ENCODE measurements at regions of chr16 and their contacts with region 1.

Region 1: GRCh38 chr16:4425378-4426020 is at the start of gene DNAJA3:
- DNase-seq: peak; percentile 91 to 97 (median 95)
- ATAC-seq: peak; percentile 93
- H3K4me3 ChIP-seq: peak within 1 kb of the TSS; percentile 97
- H3K4me3 Mint-ChIP-seq: peak within 1 kb of the TSS; percentile 92 to 99 (median 98)
- H3K27ac ChIP-seq: peak within 1 kb of the TSS; percentile 95
- H3K27ac Mint-ChIP-seq: peak within 1 kb of the TSS; percentile 99 to 100 (median 100)
- H3K4me1 ChIP-seq: peaks cover 18% of the 10 kb centered on the region in 2 donors
- H3K4me1 Mint-ChIP-seq: peaks cover 26 to 37% (median 31%) of the 10 kb centered on the region in 7 donors
- H3K27me3 ChIP-seq: no peaks in the 10 kb centered on the region
- H3K27me3 Mint-ChIP-seq: peaks cover 0 to 4% (median 0%) of the 10 kb centered on the region in 5 donors
- total RNA-seq, gene DNAJA3: 33.6 to 79.8 (median 70.5) TPM

Region 2: GRCh38 chr16:4232541-4233386 is 192.7 kb before region 1 on chr16:
- CTCF ChIA-PET with region 1: no interaction called
- POLR2A ChIA-PET with region 1: no interaction called
- intact Hi-C with region 1: no loop called
- DNase-seq: no peak
- ATAC-seq: no peak
- H3K4me3 ChIP-seq: no peak overlapping the region
- H3K4me3 Mint-ChIP-seq: no peak overlapping the region
- H3K27ac ChIP-seq: no peak overlapping the region
- H3K27ac Mint-ChIP-seq: no peak overlapping the region
- H3K4me1 ChIP-seq: no peaks in the 10 kb centered on the region
- H3K4me1 Mint-ChIP-seq: no peaks in the 10 kb centered on the region
- H3K27me3 ChIP-seq: no peaks in the 10 kb centered on the region
- H3K27me3 Mint-ChIP-seq: peaks cover 7 to 14% (median 10%) of the 10 kb centered on the region in 5 donors

Region 3: DNA sequence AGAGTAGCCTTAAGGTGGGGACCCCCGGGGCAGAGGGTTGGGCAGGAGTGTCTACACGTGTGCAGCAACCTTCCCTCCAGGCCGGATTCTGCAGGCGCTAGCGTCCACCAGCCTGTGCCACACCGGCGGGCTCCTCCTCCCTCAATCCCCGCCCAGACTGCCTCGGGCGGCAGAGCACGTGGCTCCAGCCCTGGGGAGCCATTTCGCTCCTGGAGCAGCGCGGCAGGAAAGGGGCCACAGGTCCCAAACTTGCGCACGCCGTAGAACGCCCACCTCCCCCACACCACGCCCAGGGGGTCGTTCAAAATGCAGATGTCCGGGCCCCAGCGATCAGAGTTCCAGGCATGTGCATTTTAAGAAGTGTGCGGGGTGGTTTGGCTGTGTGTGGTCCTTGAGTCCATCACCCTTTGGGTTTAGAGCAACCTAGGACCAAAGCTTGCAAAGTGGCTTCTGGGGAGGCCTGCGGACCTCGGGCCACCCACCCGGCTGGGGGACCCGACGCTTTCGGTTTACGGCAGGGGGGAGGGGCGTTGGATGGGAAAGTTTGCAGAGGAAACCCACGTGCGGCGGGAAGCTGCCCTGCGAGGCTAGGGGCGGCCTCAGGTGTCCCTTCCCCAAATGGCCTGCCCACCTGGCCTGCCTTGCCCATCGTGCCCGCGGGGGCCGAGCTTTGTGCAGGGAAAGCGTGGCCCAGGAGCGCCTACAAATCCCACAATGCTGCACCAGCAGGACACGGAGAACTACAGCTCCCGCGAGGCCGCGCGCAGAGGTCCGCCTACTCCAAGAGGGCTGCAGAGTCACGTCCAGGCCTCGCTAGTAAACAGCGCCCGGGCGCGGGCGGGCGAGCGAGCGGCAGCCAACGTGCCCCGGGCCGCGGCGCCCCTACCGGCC is 154.1 kb before region 1 on chr16:
- CTCF ChIA-PET with region 1: no interaction called
- POLR2A ChIA-PET with region 1: no interaction called
- intact Hi-C with region 1: loop called in 1 of 2 experiments (anchors 1 kb)
- DNase-seq: peak; percentile 68 to 90 (median 84)
- ATAC-seq: peak; percentile 89
- H3K4me3 ChIP-seq: peak overlapping the region; percentile 99
- H3K4me3 Mint-ChIP-seq: peak overlapping the region; percentile 85 to 97 (median 92)
- H3K27ac ChIP-seq: peak overlapping the region; percentile 58
- H3K27ac Mint-ChIP-seq: peak overlapping the region; percentile 67 to 98 (median 83)
- H3K4me1 ChIP-seq: peaks cover 5 to 13% of the 10 kb centered on the region in 2 donors
- H3K4me1 Mint-ChIP-seq: peaks cover 8 to 23% (median 15%) of the 10 kb centered on the region in 7 donors
- H3K27me3 ChIP-seq: no peaks in the 10 kb centered on the region
- H3K27me3 Mint-ChIP-seq: no peaks in the 10 kb centered on the region

Region 4: GRCh38 chr16:4283939-4284338 is 141.6 kb before region 1 on chr16:
- CTCF ChIA-PET with region 1: no interaction called
- POLR2A ChIA-PET with region 1: no interaction called
- intact Hi-C with region 1: no loop called
- DNase-seq: no peak
- ATAC-seq: no peak
- H3K4me3 ChIP-seq: no peak overlapping the region
- H3K4me3 Mint-ChIP-seq: no peak overlapping the region
- H3K27ac ChIP-seq: no peak overlapping the region
- H3K27ac Mint-ChIP-seq: no peak overlapping the region
- H3K4me1 ChIP-seq: peaks cover 6 to 7% of the 10 kb centered on the region in 2 donors
- H3K4me1 Mint-ChIP-seq: peaks cover 4 to 12% (median 5%) of the 10 kb centered on the region in 7 donors
- H3K27me3 ChIP-seq: no peaks in the 10 kb centered on the region
- H3K27me3 Mint-ChIP-seq: peaks cover 5 to 20% (median 11%) of the 10 kb centered on the region in 5 donors

Measured in naive thymus-derived CD4-positive, alpha-beta T cell (primary cell).